Astrocyte of the cerebellum (primary cell): ENCODE measurements at regions of chr5 and their contacts with region 1.

Region 1: DNA sequence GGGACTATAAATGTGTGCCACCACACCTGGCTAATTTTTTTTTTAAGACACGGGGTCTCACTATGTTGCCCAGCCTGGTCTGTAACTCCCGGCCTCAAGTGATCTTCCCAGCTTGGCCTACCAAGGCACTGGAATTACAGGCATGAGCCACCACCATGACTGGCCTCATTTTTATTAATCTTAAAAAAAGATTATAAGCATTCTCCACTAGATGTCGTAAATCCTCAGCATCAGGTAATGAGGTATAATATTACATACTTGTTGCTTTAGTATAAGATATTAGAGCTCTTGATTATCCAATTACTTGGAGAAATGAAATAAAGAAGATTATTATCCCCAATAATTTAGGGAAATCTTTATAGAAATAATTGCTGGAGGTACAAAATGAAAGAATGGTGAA is 78.2 kb upstream of the HTR1A start:
- DNase-seq: no peak
- H3K4me3 ChIP-seq: no peak overlapping the region
- CTCF ChIP-seq: no peak

Region 2: DNA sequence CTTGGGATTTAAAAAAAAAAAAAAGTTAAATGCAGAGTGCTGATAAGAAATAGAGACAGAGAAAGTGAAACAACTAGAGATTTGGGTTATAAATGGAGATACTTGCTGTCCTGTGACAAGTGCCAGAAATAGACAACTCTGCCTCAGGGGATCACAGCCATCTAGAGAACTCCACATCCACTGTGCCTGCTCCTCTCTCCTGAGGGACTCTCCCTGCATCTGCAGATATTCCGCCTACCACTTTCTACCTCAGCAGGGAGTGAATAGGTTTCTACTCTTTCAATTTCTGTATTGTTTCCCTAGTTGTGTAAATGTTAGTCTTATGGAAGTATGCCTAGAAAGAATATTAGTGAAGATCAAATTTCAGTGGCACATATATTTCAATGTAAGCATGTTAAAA is 385.4 kb before region 1 on chr5:
- in situ Hi-C with region 1: loop called (anchors 10 kb)
- DNase-seq: no peak
- H3K4me3 ChIP-seq: no peak overlapping the region
- CTCF ChIP-seq: no peak

Region 3: GRCh38 chr5:63987053-63987452 is 53.4 kb before region 1 on chr5:
- in situ Hi-C with region 1: no loop called
- DNase-seq: no peak
- H3K4me3 ChIP-seq: no peak overlapping the region
- CTCF ChIP-seq: no peak